CD4-positive, alpha-beta T cell (primary cell): ENCODE measurements at regions of chr12 and their contacts with region 1.

Region 1: GRCh38 chr12:44930972-44931600 is 55.0 kb upstream of the NELL2 start:
- DNase-seq: peak in 3 of 14 experiments; percentile 67 to 80 (median 74)
- ATAC-seq: peak; percentile 60
- H3K4me3 ChIP-seq: no peak overlapping the region
- H3K4me3 Mint-ChIP-seq: no peak overlapping the region
- H3K27ac ChIP-seq: no peak overlapping the region
- H3K27ac Mint-ChIP-seq: no peak overlapping the region
- H3K4me1 ChIP-seq: no peaks in the 10 kb centered on the region
- H3K4me1 Mint-ChIP-seq: peaks cover 5% of the 10 kb centered on the region
- H3K27me3 ChIP-seq: no peaks in the 10 kb centered on the region
- H3K27me3 Mint-ChIP-seq: peaks cover 4% of the 10 kb centered on the region
- CTCF ChIP-seq: peak; percentile 77

Region 2: GRCh38 chr12:43957732-43958372 is 973.2 kb before region 1 on chr12:
- CTCF ChIA-PET with region 1: no interaction called
- POLR2A ChIA-PET with region 1: no interaction called
- intact Hi-C with region 1: loop called (anchors 1 to 5 kb)
- DNase-seq: peak in 4 of 14 experiments; percentile 3 to 39 (median 34)
- ATAC-seq: no peak
- H3K4me3 ChIP-seq: no peak overlapping the region
- H3K4me3 Mint-ChIP-seq: no peak overlapping the region
- H3K27ac ChIP-seq: no peak overlapping the region
- H3K27ac Mint-ChIP-seq: no peak overlapping the region
- H3K4me1 ChIP-seq: no peaks in the 10 kb centered on the region
- H3K4me1 Mint-ChIP-seq: no peaks in the 10 kb centered on the region
- H3K27me3 ChIP-seq: no peaks in the 10 kb centered on the region
- H3K27me3 Mint-ChIP-seq: no peaks in the 10 kb centered on the region
- CTCF ChIP-seq: peak; percentile 41

Region 3: DNA sequence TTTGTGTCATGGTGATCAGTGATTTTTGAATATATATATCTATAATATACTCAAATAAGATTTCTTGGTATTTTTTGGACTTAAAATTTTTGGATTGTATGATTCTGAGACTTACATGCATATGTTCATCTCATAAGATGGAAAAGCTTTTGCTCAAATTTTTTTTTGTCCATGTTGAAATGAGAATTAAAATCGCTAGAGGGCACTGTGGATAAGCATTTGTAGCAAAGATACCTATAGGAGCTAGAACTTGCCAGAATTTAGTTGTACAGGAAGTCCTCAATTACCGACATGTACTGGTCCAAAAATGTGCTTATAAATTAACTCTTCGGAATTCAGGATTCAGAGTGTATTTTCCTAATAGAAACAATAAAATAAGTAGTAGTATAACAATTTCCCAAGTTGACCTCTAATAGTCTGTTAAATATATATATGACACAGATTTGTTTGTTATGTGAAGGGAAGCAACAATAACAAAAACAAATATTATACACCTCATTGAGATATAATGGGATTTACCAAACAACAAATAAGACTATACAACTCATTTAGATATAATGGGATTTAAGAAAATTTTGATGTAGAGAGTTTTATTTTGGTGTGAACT is 915.6 kb before region 1 on chr12:
- CTCF ChIA-PET with region 1: interaction called, 4 read pairs
- POLR2A ChIA-PET with region 1: interaction called, 4 read pairs
- intact Hi-C with region 1: loop called (anchors 1 kb)
- DNase-seq: peak in 3 of 14 experiments; percentile 55 to 63 (median 59)
- ATAC-seq: peak; percentile 49
- H3K4me3 ChIP-seq: no peak overlapping the region
- H3K4me3 Mint-ChIP-seq: no peak overlapping the region
- H3K27ac ChIP-seq: no peak overlapping the region
- H3K27ac Mint-ChIP-seq: no peak overlapping the region
- H3K4me1 ChIP-seq: no peaks in the 10 kb centered on the region
- H3K4me1 Mint-ChIP-seq: peaks cover 4% of the 10 kb centered on the region
- H3K27me3 ChIP-seq: no peaks in the 10 kb centered on the region
- H3K27me3 Mint-ChIP-seq: no peaks in the 10 kb centered on the region
- CTCF ChIP-seq: peak; percentile 69

Region 4: DNA sequence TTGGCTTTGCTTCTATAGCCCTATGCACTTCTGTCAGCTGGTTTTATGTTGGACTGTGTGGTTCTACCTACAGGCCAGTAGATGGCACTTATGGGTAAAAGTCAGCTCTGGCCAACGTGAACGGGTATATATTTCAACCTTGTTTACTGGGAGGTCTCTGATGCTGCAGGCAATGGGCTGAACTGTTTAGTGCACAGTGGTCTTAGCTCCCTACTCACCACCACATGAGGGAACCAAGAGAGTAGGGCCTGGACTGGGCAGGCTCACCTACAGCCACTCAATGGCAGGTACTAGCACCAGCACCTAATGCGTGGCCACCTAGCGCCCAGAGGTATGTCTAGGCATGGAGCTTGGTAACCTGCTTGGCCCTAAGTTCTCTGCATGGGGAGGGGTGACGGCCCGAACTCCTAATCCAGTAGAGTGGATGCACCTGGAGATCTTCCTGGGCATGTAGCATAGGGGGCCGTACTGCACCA is 613.4 kb before region 1 on chr12:
- CTCF ChIA-PET with region 1: no interaction called
- POLR2A ChIA-PET with region 1: no interaction called
- intact Hi-C with region 1: loop called (anchors 5 to 10 kb)
- DNase-seq: peak in 2 of 14 experiments; percentile 6 to 12
- ATAC-seq: no peak
- H3K4me3 ChIP-seq: no peak overlapping the region
- H3K4me3 Mint-ChIP-seq: no peak overlapping the region
- H3K27ac ChIP-seq: no peak overlapping the region
- H3K27ac Mint-ChIP-seq: no peak overlapping the region
- H3K4me1 ChIP-seq: no peaks in the 10 kb centered on the region
- H3K4me1 Mint-ChIP-seq: no peaks in the 10 kb centered on the region
- H3K27me3 ChIP-seq: no peaks in the 10 kb centered on the region
- H3K27me3 Mint-ChIP-seq: no peaks in the 10 kb centered on the region
- CTCF ChIP-seq: no peak

Region 5: DNA sequence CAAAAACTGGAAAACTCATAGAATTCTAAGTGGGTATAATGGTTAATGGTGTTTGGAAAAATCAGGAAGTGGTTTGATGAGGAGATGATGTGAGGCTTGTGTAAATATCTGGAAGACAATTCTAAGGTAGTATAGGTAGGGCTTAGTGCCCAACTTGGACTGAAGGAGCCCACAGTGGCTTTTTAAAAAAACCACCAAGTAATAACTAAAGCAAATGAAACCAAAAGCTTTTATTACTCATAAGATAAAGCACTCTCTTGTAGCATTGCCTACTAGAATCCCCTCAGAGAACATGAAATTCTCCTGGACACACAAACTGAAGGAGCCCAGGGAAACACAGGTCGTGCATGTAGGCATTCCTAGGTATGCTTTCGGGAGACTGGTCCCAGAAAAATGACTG is 379.5 kb before region 1 on chr12:
- CTCF ChIA-PET with region 1: no interaction called
- POLR2A ChIA-PET with region 1: no interaction called
- intact Hi-C with region 1: no loop called
- DNase-seq: no peak
- ATAC-seq: no peak
- H3K4me3 ChIP-seq: no peak overlapping the region
- H3K4me3 Mint-ChIP-seq: no peak overlapping the region
- H3K27ac ChIP-seq: no peak overlapping the region
- H3K27ac Mint-ChIP-seq: no peak overlapping the region
- H3K4me1 ChIP-seq: no peaks in the 10 kb centered on the region
- H3K4me1 Mint-ChIP-seq: peaks cover 14% of the 10 kb centered on the region
- H3K27me3 ChIP-seq: no peaks in the 10 kb centered on the region
- H3K27me3 Mint-ChIP-seq: no peaks in the 10 kb centered on the region
- CTCF ChIP-seq: no peak

Region 6: DNA sequence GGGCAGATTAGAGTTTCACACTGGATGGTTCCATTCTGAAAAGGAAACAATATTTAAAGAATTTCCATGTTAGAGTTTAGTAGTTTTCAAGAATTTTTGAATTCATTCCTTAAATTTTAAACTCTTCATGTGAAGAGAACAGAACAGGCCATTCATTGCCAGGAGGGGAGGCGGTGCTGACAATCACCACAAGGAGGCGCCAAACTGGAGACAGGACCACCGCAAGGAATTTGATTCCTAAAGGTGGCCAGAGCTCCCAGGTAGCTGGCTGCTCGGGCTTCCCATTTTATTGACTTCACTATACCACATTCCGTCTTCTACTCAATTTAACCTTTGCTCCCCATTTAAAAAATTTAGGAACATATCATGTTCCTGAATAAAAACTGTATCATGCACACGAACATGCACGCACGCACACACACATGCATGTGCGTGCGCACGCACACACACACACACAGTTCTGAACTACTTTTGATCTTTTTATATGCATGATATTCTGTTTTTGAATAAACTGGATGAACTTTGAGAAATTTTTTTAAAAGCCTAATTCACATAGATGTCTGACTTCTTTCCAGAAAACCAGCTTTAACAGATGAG is 156.2 kb before region 1 on chr12:
- CTCF ChIA-PET with region 1: interaction called, 10 read pairs
- POLR2A ChIA-PET with region 1: no interaction called
- intact Hi-C with region 1: loop called (anchors 1 to 2 kb)
- DNase-seq: peak; percentile 43 to 78 (median 56)
- ATAC-seq: no peak
- H3K4me3 ChIP-seq: no peak overlapping the region
- H3K4me3 Mint-ChIP-seq: no peak overlapping the region
- H3K27ac ChIP-seq: no peak overlapping the region
- H3K27ac Mint-ChIP-seq: no peak overlapping the region
- H3K4me1 ChIP-seq: no peaks in the 10 kb centered on the region
- H3K4me1 Mint-ChIP-seq: peaks cover 4% of the 10 kb centered on the region
- H3K27me3 ChIP-seq: no peaks in the 10 kb centered on the region
- H3K27me3 Mint-ChIP-seq: no peaks in the 10 kb centered on the region
- CTCF ChIP-seq: peak; percentile 91

Region 7: DNA sequence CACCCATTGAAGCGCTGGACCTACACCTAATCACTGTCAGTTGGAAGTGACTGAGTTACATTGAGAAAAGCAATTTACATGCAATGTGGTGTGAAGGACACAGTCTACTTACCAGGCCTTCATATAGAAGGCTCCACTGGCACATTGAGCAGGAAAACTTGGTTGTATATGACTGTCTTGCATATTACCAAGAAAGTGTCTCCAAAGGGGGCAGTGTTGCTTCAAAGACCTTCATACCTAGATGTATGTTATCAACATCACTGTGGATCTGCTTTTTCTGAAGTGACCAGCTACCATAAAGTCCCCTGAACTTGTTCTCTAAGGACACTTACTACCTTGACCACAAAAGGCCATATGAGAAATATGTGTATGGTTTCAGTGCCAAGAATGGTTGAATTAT is 119.0 kb before region 1 on chr12:
- CTCF ChIA-PET with region 1: interaction called, 14 read pairs
- POLR2A ChIA-PET with region 1: interaction called, 3 read pairs
- intact Hi-C with region 1: loop called (anchors 1 to 2 kb)
- DNase-seq: peak in 10 of 14 experiments; percentile 14 to 81 (median 38)
- ATAC-seq: peak; percentile 86
- H3K4me3 ChIP-seq: no peak overlapping the region
- H3K4me3 Mint-ChIP-seq: no peak overlapping the region
- H3K27ac ChIP-seq: no peak overlapping the region
- H3K27ac Mint-ChIP-seq: no peak overlapping the region
- H3K4me1 ChIP-seq: peaks cover 7% of the 10 kb centered on the region
- H3K4me1 Mint-ChIP-seq: peaks cover 47% of the 10 kb centered on the region
- H3K27me3 ChIP-seq: no peaks in the 10 kb centered on the region
- H3K27me3 Mint-ChIP-seq: no peaks in the 10 kb centered on the region
- CTCF ChIP-seq: peak; percentile 68

Region 8: GRCh38 chr12:44917141-44917540 is 13.9 kb before region 1 on chr12:
- CTCF ChIA-PET with region 1: no interaction called
- POLR2A ChIA-PET with region 1: no interaction called
- intact Hi-C with region 1: no loop called
- DNase-seq: no peak
- ATAC-seq: no peak
- H3K4me3 ChIP-seq: no peak overlapping the region
- H3K4me3 Mint-ChIP-seq: no peak overlapping the region
- H3K27ac ChIP-seq: no peak overlapping the region
- H3K27ac Mint-ChIP-seq: no peak overlapping the region
- H3K4me1 ChIP-seq: no peaks in the 10 kb centered on the region
- H3K4me1 Mint-ChIP-seq: no peaks in the 10 kb centered on the region
- H3K27me3 ChIP-seq: no peaks in the 10 kb centered on the region
- H3K27me3 Mint-ChIP-seq: no peaks in the 10 kb centered on the region
- CTCF ChIP-seq: no peak

Region 9: DNA sequence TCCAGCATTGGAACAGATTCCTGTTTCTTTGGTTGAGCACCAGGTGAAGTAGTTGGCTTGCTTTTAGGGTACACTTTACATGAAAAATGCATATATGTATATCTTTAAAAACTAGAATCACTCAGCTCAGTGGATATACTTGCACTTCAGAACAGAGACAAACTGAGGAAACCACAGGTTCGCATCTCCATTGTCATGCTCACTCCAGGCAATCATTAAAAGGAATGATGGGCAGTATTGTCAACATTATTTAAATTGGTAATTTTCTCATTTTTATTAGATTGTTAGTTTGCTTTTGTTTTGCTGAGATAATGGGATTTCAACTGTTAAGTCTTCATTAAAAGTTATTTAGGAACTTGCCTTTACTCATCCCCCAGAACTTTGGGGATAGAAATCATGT is 16.1 kb after region 1 on chr12:
- CTCF ChIA-PET with region 1: interaction called, 12 read pairs
- POLR2A ChIA-PET with region 1: no interaction called
- intact Hi-C with region 1: no loop called
- DNase-seq: no peak
- ATAC-seq: no peak
- H3K4me3 ChIP-seq: no peak overlapping the region
- H3K4me3 Mint-ChIP-seq: no peak overlapping the region
- H3K27ac ChIP-seq: no peak overlapping the region
- H3K27ac Mint-ChIP-seq: no peak overlapping the region
- H3K4me1 ChIP-seq: peaks cover 5% of the 10 kb centered on the region
- H3K4me1 Mint-ChIP-seq: peaks cover 4% of the 10 kb centered on the region
- H3K27me3 ChIP-seq: no peaks in the 10 kb centered on the region
- H3K27me3 Mint-ChIP-seq: peaks cover 28% of the 10 kb centered on the region
- CTCF ChIP-seq: no peak

Region 10: DNA sequence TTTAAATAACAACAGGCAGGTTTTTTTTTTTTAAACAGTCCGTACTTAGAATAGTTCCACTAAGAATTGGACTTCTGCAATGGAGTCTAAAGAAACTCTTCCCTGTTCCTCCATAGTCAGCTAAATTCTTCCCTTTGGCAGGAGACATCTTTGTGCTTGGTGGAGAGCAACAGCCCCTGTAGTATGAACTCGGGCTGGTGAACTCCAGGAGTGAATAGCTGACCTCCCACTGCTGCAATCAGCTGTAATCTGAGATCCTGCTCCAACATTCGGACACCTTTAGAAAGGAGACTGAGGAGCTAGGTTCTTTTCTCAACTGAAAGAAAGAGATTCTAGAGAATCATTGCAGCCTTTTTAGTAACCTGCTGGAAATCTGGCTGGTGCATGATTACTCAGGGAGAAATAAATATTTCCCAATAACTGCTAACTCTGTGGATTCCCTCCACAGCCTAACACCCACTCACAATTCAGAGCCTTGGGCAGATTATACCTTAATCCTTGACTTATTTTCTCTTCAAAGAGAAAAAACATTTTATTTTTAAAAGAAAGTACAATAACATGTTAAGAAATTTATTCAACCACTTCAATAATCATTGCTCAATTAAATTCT is 145.4 kb after region 1 on chr12:
- CTCF ChIA-PET with region 1: no interaction called
- POLR2A ChIA-PET with region 1: no interaction called
- intact Hi-C with region 1: no loop called
- DNase-seq: no peak
- ATAC-seq: no peak
- H3K4me3 ChIP-seq: no peak overlapping the region
- H3K4me3 Mint-ChIP-seq: no peak overlapping the region
- H3K27ac ChIP-seq: no peak overlapping the region
- H3K27ac Mint-ChIP-seq: no peak overlapping the region
- H3K4me1 ChIP-seq: no peaks in the 10 kb centered on the region
- H3K4me1 Mint-ChIP-seq: no peaks in the 10 kb centered on the region
- H3K27me3 ChIP-seq: no peaks in the 10 kb centered on the region
- H3K27me3 Mint-ChIP-seq: peaks cover 13% of the 10 kb centered on the region
- CTCF ChIP-seq: no peak